GM12878 (cell line): ENCODE measurements at regions of chr3 and their contacts with region 1.

Region 1: GRCh38 chr3:137121704-137122314 is 164.0 kb downstream of the IL20RB start:
- DNase-seq: peak; percentile 8
- ATAC-seq: peak; percentile 92
- H3K4me3 ChIP-seq: no peak overlapping the region
- H3K27ac ChIP-seq: no peak overlapping the region
- H3K4me1 ChIP-seq: no peaks in the 10 kb centered on the region
- H3K27me3 ChIP-seq: no peaks in the 10 kb centered on the region
- CTCF ChIP-seq: peak; percentile 75 to 81 (median 80)
- EP300 ChIP-seq: no peak
- POLR2A ChIP-seq: no peak
- RAD21 ChIP-seq: peak; percentile 91

Region 2: GRCh38 chr3:137047240-137047639 is 74.6 kb before region 1 on chr3:
- CTCF ChIA-PET with region 1: no interaction called
- POLR2A ChIA-PET with region 1: no interaction called
- RAD21 ChIA-PET with region 1: no interaction called
- SMC1A ChIA-PET with region 1: no interaction called
- in situ Hi-C with region 1: no loop called
- intact Hi-C with region 1: no loop called
- DNase-seq: no peak
- ATAC-seq: no peak
- H3K4me3 ChIP-seq: no peak overlapping the region
- H3K27ac ChIP-seq: no peak overlapping the region
- H3K4me1 ChIP-seq: no peaks in the 10 kb centered on the region
- H3K27me3 ChIP-seq: no peaks in the 10 kb centered on the region
- CTCF ChIP-seq: no peak
- EP300 ChIP-seq: no peak
- POLR2A ChIP-seq: no peak
- RAD21 ChIP-seq: no peak

Region 3: DNA sequence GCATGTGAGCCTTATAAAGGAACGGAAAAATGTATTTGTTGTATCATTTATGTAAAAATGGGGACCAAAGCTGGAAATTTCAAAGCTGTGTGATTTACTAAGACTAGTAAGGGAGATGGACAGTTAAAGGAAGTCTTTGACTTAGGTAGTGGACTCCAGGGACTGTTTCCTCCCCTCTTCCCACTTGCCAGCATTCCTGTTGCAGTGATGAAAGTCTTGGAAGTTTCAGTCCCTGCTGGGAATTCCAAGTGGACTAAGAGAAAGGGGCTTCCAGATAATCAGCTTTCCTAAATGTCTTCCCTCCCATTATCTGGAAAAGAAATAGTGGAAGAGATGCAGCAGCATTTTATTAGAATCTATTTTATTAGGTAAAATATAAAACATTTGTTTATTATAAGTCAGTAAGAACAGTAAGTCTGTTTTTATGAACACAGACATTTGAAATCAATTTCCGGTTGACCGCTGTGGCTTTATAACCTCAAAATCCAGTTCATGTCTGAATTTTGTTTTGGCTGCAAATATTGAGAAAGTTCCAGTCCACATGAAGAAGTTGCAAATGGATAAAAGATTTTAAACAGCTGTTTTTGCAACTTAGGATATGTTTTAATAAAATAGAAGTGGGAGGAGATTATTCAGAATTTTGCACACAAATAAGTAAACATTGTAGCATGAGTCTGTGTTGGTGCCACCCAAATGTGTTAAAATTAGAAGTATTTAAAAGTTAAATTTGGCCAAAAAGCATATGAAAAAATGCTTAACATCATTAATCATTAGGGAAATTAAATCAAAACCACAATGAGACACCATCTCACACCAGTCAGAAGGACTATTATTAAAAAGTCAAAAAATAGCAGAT is 22.2 kb before region 1 on chr3:
- CTCF ChIA-PET with region 1: no interaction called
- POLR2A ChIA-PET with region 1: no interaction called
- RAD21 ChIA-PET with region 1: no interaction called
- SMC1A ChIA-PET with region 1: no interaction called
- in situ Hi-C with region 1: no loop called
- intact Hi-C with region 1: no loop called
- DNase-seq: no peak
- ATAC-seq: no peak
- H3K4me3 ChIP-seq: no peak overlapping the region
- H3K27ac ChIP-seq: no peak overlapping the region
- H3K4me1 ChIP-seq: no peaks in the 10 kb centered on the region
- H3K27me3 ChIP-seq: no peaks in the 10 kb centered on the region
- CTCF ChIP-seq: no peak
- EP300 ChIP-seq: no peak
- POLR2A ChIP-seq: no peak
- RAD21 ChIP-seq: no peak

Region 4: GRCh38 chr3:137110484-137110883 is 11.3 kb before region 1 on chr3:
- CTCF ChIA-PET with region 1: interaction called, 22 read pairs
- POLR2A ChIA-PET with region 1: no interaction called
- RAD21 ChIA-PET with region 1: interaction called, 9 read pairs
- SMC1A ChIA-PET with region 1: interaction called, 5 read pairs
- in situ Hi-C with region 1: no loop called
- intact Hi-C with region 1: no loop called
- DNase-seq: no peak
- ATAC-seq: peak; percentile 85
- H3K4me3 ChIP-seq: no peak overlapping the region
- H3K27ac ChIP-seq: no peak overlapping the region
- H3K4me1 ChIP-seq: no peaks in the 10 kb centered on the region
- H3K27me3 ChIP-seq: no peaks in the 10 kb centered on the region; a peak in 1 of 4 replicates
- CTCF ChIP-seq: peak; percentile 68 to 89 (median 88)
- EP300 ChIP-seq: no peak
- POLR2A ChIP-seq: no peak
- RAD21 ChIP-seq: peak; percentile 95

Region 5: GRCh38 chr3:137409584-137409983 is 287.8 kb after region 1 on chr3:
- CTCF ChIA-PET with region 1: no interaction called
- POLR2A ChIA-PET with region 1: no interaction called
- RAD21 ChIA-PET with region 1: no interaction called
- SMC1A ChIA-PET with region 1: no interaction called
- in situ Hi-C with region 1: no loop called
- intact Hi-C with region 1: loop called (anchors 10 kb)
- DNase-seq: no peak
- ATAC-seq: no peak
- H3K4me3 ChIP-seq: no peak overlapping the region
- H3K27ac ChIP-seq: no peak overlapping the region
- H3K4me1 ChIP-seq: no peaks in the 10 kb centered on the region
- H3K27me3 ChIP-seq: no peaks in the 10 kb centered on the region
- CTCF ChIP-seq: peak; percentile 5 to 23 (median 10); a peak in 3 of 6 replicates
- EP300 ChIP-seq: no peak
- POLR2A ChIP-seq: no peak
- RAD21 ChIP-seq: peak; percentile 31; the same call in 1 of the 2 replicates

Region 6: DNA sequence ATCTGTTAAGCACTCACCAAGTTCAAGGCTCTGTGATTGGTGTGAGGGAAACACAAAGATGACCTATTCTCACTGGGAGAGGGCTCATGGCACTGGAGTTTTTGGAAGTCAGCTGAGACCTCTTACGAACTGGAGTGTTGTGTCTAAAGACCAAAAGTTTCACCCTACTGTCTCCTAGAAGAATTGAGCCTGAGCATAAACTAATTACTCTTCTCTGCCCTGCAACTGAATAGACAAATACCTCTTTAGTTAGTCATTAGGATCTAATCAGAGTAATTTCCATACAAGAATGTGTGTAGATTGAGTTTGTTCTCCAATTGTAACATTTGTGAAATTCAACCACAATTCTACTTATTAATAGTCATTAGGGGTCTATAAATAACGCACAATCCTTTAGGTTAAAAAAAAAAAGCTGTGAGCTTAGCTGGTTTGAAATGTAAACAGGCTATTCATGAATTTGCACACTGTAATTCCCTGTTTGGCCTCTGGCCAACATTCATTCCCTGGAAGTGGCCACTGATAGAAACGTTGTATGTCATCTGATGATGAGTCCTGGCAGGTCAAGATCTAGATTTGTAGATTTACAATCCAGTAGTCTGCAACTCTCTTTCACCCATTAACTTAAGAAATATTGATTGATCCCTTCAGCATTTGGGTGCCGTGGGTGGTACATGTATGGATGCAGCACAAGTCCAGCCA is 565.5 kb after region 1 on chr3:
- CTCF ChIA-PET with region 1: interaction called, 12 read pairs
- POLR2A ChIA-PET with region 1: no interaction called
- RAD21 ChIA-PET with region 1: no interaction called
- SMC1A ChIA-PET with region 1: interaction called, 32 read pairs
- in situ Hi-C with region 1: loop called (anchors 5 kb)
- intact Hi-C with region 1: loop called (anchors 2 kb)
- DNase-seq: no peak
- ATAC-seq: no peak
- H3K4me3 ChIP-seq: no peak overlapping the region
- H3K27ac ChIP-seq: no peak overlapping the region
- H3K4me1 ChIP-seq: no peaks in the 10 kb centered on the region
- H3K27me3 ChIP-seq: no peaks in the 10 kb centered on the region
- CTCF ChIP-seq: no peak
- EP300 ChIP-seq: no peak
- POLR2A ChIP-seq: no peak
- RAD21 ChIP-seq: no peak